ENCODE measurements at regions of chr11 and their contacts with region 1.

Region 1: DNA sequence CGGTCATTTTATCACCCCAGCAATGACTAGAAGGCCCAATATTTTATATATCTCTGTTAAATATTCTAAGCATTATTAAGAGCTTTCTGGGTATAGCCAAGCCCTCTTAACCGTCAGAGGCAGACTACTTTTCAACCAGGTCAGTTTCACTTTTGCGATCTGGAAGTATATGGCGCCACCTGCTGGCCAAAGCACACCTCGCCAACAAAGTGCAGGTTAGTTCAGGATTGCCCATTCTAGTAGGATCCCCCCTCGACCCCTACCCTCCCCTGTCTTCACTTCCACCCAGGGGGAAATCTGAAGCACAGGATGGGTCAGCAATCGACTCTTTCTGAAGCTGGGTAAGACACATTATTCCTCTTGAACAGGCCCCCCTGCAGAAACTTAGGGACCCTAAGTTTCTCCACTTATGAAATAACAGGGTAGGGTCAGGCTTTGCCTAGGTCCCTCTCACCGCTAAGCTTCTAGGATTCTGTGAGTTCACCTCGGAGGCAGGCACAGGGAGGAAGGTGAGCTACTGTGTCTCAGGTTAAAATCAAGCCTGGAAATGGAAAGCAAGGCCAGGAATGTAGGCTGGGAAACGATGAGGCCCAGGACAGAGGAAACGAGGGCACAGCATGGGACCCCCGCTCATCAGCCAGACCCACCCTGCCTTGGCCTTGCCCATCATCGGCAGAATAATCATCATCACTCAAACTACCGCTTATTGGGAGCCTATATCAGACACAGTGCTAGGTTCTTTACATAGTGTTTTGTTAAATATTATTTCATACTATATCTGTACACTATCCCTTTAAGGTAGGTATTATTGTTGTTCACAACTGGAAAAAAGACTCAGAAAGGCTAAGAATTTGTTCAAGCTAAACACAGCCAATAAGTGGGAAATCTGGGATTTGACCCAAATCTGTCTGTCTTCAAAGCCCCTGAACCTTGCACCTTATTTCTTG is 35.6 kb downstream of the KCNJ1 start:
- DNase-seq: peak; percentile 89
- ATAC-seq: peak; percentile 89
- H3K4me3 Mint-ChIP-seq: no peak overlapping the region
- H3K27ac Mint-ChIP-seq: no peak overlapping the region
- H3K4me1 Mint-ChIP-seq: peaks cover 25% of the 10 kb centered on the region
- H3K27me3 Mint-ChIP-seq: no peaks in the 10 kb centered on the region
- CTCF ChIP-seq: peak; percentile 94

Region 2: DNA sequence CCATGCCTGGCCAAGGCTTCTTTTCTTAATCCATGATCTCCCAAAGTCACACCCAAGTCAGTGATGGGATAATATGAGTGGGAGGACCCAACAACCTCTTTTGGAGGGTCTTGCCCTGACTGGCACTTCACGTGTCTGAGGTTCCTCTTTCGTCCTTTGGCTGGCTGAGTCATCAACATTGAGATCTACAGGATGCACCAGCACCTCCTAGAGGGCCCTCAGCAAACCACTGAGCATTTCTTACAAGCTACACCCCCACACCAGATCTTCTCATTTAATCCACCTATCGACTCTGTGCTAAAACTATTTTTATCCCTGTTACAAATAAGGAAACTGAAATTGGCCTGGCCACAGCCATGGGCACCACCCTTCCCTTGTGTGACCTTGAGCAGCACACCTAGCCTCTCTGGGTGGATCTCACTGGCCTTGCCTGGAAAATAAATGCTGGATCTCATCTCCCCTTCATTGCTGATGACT is 74.2 kb before region 1 on chr11:
- CTCF ChIA-PET with region 1: interaction called, 16 read pairs
- POLR2A ChIA-PET with region 1: no interaction called
- DNase-seq: peak; percentile 36
- ATAC-seq: peak; percentile 76
- H3K4me3 Mint-ChIP-seq: no peak overlapping the region
- H3K27ac Mint-ChIP-seq: no peak overlapping the region
- H3K4me1 Mint-ChIP-seq: peaks cover 26% of the 10 kb centered on the region
- H3K27me3 Mint-ChIP-seq: peaks cover 3% of the 10 kb centered on the region
- CTCF ChIP-seq: no peak

Region 3: GRCh38 chr11:128784059-128784804 is 47.2 kb before region 1 on chr11:
- CTCF ChIA-PET with region 1: interaction called, 12 read pairs
- POLR2A ChIA-PET with region 1: no interaction called
- DNase-seq: peak; percentile 32
- ATAC-seq: peak; percentile 94
- H3K4me3 Mint-ChIP-seq: peak overlapping the region; percentile 43
- H3K27ac Mint-ChIP-seq: peak overlapping the region; percentile 93
- H3K4me1 Mint-ChIP-seq: peaks cover 49% of the 10 kb centered on the region
- H3K27me3 Mint-ChIP-seq: no peaks in the 10 kb centered on the region; the same call in none of the 2 replicates
- CTCF ChIP-seq: no peak

Region 4: GRCh38 chr11:128848815-128849455 is 17.5 kb after region 1 on chr11:
- CTCF ChIA-PET with region 1: interaction called, 16 read pairs
- POLR2A ChIA-PET with region 1: no interaction called
- DNase-seq: peak; percentile 90
- ATAC-seq: peak; percentile 100
- H3K4me3 Mint-ChIP-seq: no peak overlapping the region
- H3K27ac Mint-ChIP-seq: no peak overlapping the region
- H3K4me1 Mint-ChIP-seq: peaks cover 4% of the 10 kb centered on the region; the same call in 1 of the 2 replicates
- H3K27me3 Mint-ChIP-seq: no peaks in the 10 kb centered on the region
- CTCF ChIP-seq: peak; percentile 98

Measured in WTC11 (cell line).